ENCODE measurements at regions of chr6 and their contacts with region 1.

Region 1: GRCh38 chr6:2958331-2959175 is 12.8 kb downstream of the SERPINB6 start:
- DNase-seq: no peak
- ATAC-seq: peak; percentile 80
- H3K4me3 Mint-ChIP-seq: peak overlapping the region; percentile 37
- H3K27ac Mint-ChIP-seq: peak overlapping the region; percentile 64
- H3K4me1 Mint-ChIP-seq: peaks cover 13% of the 10 kb centered on the region
- H3K27me3 Mint-ChIP-seq: no peaks in the 10 kb centered on the region

Region 2: DNA sequence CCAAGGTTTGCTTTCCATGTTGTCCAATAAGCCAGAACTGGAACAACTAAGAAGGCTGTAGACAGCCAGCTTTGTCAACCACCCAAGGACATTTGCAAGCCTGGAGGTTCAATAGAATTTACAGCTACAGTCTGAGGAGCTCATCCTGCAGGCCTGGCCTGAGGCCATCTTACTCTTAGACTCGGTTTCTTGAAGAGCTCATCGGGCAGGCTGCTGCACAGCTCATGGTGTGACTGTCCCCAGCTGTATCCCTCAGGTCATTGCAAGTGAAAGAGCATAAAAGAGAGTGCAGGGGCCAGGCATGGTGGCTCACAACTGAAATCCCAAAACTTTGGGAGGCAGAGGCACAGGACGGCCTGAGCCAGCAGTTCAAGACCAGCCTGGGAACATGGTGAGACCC is 1743.5 kb before region 1 on chr6:
- POLR2A ChIA-PET with region 1: no interaction called
- DNase-seq: no peak
- ATAC-seq: no peak
- H3K4me3 Mint-ChIP-seq: no peak overlapping the region
- H3K27ac Mint-ChIP-seq: no peak overlapping the region
- H3K4me1 Mint-ChIP-seq: no peaks in the 10 kb centered on the region
- H3K27me3 Mint-ChIP-seq: peaks cover 9% of the 10 kb centered on the region

Region 3: GRCh38 chr6:2971420-2972218 is 13.1 kb after region 1 on chr6 and contains the start of gene SERPINB6:
- POLR2A ChIA-PET with region 1: interaction called, 10 read pairs
- DNase-seq: peak; percentile 72
- ATAC-seq: peak; percentile 66
- H3K4me3 Mint-ChIP-seq: peak within 1 kb of the TSS; percentile 90
- H3K27ac Mint-ChIP-seq: peak within 1 kb of the TSS; percentile 85
- H3K4me1 Mint-ChIP-seq: peaks cover 26% of the 10 kb centered on the region
- H3K27me3 Mint-ChIP-seq: peaks cover 5% of the 10 kb centered on the region
- total RNA-seq, gene SERPINB6: 85.3 to 85.6 TPM

Measured in activated naive CD8-positive, alpha-beta T cell treated with anti-CD3 and anti-CD28 coated beads, Interleukin-2, amount 10 ng/mL, durations not matched to agents 7 days and 5 days (primary cell).